Activated CD4-positive, alpha-beta T cell treated with anti-CD3 and anti-CD28 coated beads for 36 hours (primary cell): ENCODE measurements at regions of chr6 and their contacts with region 1.

Region 1: GRCh38 chr6:30556066-30556905 is at the start of gene GNL1:
- DNase-seq: peak; percentile 100
- ATAC-seq: peak; percentile 89
- H3K4me3 Mint-ChIP-seq: peak within 1 kb of the TSS; percentile 97
- H3K27ac Mint-ChIP-seq: peak within 1 kb of the TSS; percentile 100
- H3K4me1 Mint-ChIP-seq: peaks cover 34% of the 10 kb centered on the region
- H3K27me3 Mint-ChIP-seq: no peaks in the 10 kb centered on the region
- total RNA-seq, gene GNL1: 91.3 to 104 TPM

Region 2: DNA sequence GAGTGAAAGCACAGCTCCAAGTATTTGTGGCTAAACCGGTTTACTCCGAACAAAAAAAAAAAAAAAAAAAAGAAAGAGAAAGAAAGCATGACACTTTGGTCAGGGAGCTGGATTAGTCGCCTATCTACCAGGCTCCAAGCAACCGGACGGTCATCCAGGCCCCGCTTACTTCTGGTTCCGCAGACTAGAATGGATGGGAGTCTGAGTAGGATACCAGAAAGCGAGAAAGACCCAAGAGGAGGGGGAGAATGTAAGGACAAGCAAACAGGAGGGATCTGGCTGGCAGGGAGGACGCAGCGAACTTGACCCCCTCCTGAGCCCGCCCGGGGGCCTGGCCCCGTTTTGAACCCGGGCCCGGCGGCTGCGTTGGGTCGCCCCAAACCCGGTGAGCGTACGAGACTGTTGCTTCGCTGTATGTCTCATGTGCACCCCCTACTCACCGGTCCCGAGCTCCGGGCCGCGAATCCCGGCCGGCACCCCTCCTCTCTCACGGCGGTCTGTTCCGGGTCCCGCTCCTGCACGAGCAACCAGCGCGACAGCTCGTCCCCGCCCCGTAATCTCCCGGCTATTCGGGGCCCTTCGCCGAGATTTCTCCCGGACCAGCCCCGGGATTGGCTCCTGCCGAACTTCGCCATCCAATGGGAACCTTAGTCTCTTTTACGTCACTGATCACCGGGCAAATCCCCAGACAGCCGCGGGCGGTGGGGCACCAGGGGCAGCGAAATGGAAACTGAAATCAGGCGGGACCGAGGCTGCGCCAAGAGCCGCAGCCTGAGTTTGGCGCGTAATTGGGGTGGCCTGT is 343.2 kb before region 1 on chr6 and contains the start of gene TRIM26:
- CTCF ChIA-PET with region 1: no interaction called
- POLR2A ChIA-PET with region 1: no interaction called
- intact Hi-C with region 1: loop called in 1 of 2 experiments (anchors 5 kb)
- DNase-seq: peak; percentile 98
- ATAC-seq: peak; percentile 90
- H3K4me3 Mint-ChIP-seq: peak within 1 kb of the TSS; percentile 89
- H3K27ac Mint-ChIP-seq: peak within 1 kb of the TSS; percentile 99
- H3K4me1 Mint-ChIP-seq: peaks cover 50% of the 10 kb centered on the region
- H3K27me3 Mint-ChIP-seq: no peaks in the 10 kb centered on the region
- total RNA-seq, gene TRIM26: 48.4 to 60.4 TPM

Region 3: GRCh38 chr6:30399390-30400058 is 156.8 kb before region 1 on chr6:
- CTCF ChIA-PET with region 1: no interaction called
- POLR2A ChIA-PET with region 1: no interaction called
- intact Hi-C with region 1: no loop called
- DNase-seq: peak; percentile 25
- ATAC-seq: peak; percentile 44
- H3K4me3 Mint-ChIP-seq: no peak overlapping the region
- H3K27ac Mint-ChIP-seq: no peak overlapping the region
- H3K4me1 Mint-ChIP-seq: peaks cover 2% of the 10 kb centered on the region
- H3K27me3 Mint-ChIP-seq: peaks cover 20% of the 10 kb centered on the region

Region 4: GRCh38 chr6:30453508-30454116 is 102.7 kb before region 1 on chr6:
- CTCF ChIA-PET with region 1: no interaction called
- POLR2A ChIA-PET with region 1: no interaction called
- intact Hi-C with region 1: no loop called
- DNase-seq: peak; percentile 93
- ATAC-seq: peak; percentile 85
- H3K4me3 Mint-ChIP-seq: peak overlapping the region; percentile 55
- H3K27ac Mint-ChIP-seq: no peak overlapping the region
- H3K4me1 Mint-ChIP-seq: peaks cover 37% of the 10 kb centered on the region
- H3K27me3 Mint-ChIP-seq: peaks cover 83% of the 10 kb centered on the region

Region 5: DNA sequence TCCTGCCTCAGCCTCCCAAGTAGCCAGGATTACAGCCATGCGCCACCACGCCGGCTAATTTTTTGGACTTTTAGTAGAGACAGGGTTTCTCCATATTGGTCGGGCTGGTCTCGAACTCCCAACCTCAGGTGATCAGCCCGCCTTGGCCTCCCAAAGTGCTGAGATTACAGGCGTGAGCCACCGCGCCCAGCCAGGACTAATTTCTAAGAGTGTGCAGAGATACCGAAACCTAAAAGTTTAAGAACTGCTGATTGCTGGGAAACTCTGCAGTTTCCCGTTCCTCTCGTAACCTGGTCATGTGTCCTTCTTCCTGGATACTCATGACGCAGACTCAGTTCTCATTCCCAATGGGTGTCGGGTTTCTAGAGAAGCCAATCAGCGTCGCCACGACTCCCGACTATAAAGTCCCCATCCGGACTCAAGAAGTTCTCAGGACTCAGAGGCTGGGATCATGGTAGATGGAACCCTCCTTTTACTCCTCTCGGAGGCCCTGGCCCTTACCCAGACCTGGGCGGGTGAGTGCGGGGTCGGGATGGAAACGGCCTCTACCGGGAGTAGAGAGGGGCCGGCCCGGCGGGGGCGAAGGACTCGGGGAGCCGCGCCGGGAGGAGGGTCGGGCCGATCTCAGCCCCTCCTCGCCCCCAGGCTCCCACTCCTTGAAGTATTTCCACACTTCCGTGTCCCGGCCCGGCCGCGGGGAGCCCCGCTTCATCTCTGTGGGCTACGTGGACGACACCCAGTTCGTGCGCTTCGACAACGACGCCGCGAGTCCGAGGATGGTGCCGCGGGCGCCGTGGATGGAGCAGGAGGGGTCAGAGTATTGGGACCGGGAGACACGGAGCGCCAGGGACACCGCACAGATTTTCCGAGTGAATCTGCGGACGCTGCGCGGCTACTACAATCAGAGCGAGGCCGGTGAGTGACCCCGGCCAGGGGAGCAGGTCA is 66.9 kb before region 1 on chr6 and contains the start of gene HLA-E:
- CTCF ChIA-PET with region 1: interaction called, 9 read pairs
- POLR2A ChIA-PET with region 1: interaction called, 6 read pairs
- intact Hi-C with region 1: loop called (anchors 1 kb)
- DNase-seq: peak; percentile 92
- ATAC-seq: peak; percentile 78
- H3K4me3 Mint-ChIP-seq: peak within 1 kb of the TSS; percentile 95
- H3K27ac Mint-ChIP-seq: peak within 1 kb of the TSS; percentile 98
- H3K4me1 Mint-ChIP-seq: peaks cover 43% of the 10 kb centered on the region
- H3K27me3 Mint-ChIP-seq: no peaks in the 10 kb centered on the region
- total RNA-seq, gene HLA-E: 451 to 502 TPM

Region 6: GRCh38 chr6:30541515-30542403 is 14.5 kb before region 1 on chr6:
- CTCF ChIA-PET with region 1: interaction called, 104 read pairs
- POLR2A ChIA-PET with region 1: interaction called, 8 read pairs
- intact Hi-C with region 1: loop called in 1 of 2 experiments (anchors 1 kb)
- DNase-seq: peak; percentile 90
- ATAC-seq: peak; percentile 76
- H3K4me3 Mint-ChIP-seq: peak overlapping the region; percentile 59
- H3K27ac Mint-ChIP-seq: peak overlapping the region; percentile 79
- H3K4me1 Mint-ChIP-seq: peaks cover 40% of the 10 kb centered on the region
- H3K27me3 Mint-ChIP-seq: no peaks in the 10 kb centered on the region

Region 7: DNA sequence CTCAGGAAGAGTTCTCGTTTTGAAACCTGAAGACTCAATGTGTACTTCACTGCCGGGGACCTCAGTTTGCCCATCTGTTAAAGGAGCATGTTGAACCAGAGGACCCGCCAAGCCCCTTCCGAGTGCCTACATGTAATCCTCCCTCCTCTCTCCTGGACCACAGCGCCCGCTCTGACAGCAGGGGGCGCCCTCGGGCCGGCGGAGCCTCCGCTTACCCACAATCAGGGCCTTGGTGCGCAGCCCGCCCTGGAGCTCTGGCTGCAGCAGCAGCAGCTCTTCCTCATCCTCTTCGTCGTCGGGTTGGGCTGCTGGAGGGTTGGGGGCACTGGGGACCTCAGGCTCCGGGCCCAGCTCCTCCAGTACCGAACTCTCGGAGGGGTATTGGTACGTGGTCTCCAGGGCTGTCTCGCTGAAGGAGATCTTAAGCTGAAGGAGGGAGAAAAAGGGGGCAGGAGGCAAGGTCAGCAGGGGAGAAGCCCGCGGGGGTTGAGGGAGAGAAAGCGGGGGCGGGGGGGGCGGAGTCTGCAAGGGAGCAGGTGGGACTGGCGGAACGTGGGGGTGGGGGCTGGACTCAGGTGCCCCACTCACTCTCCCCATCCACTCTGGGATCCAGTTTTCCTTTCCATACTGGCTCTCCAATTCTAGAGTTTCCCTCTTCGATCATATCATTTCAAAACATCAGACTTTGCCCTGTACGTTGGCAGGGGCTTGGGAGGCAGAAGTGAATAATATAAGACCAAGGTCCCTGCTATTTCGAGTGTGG is 122.9 kb after region 1 on chr6:
- CTCF ChIA-PET with region 1: interaction called, 3 read pairs
- POLR2A ChIA-PET with region 1: interaction called, 4 read pairs
- intact Hi-C with region 1: loop called in 1 of 2 experiments (anchors 1 kb)
- DNase-seq: peak; percentile 96
- ATAC-seq: peak; percentile 37
- H3K4me3 Mint-ChIP-seq: peak overlapping the region; percentile 100
- H3K27ac Mint-ChIP-seq: peak overlapping the region; percentile 97
- H3K4me1 Mint-ChIP-seq: peaks cover 23% of the 10 kb centered on the region
- H3K27me3 Mint-ChIP-seq: no peaks in the 10 kb centered on the region

Region 8: GRCh38 chr6:30742316-30743098 is 186.2 kb after region 1 on chr6 and contains the start of gene FLOT1:
- CTCF ChIA-PET with region 1: no interaction called
- POLR2A ChIA-PET with region 1: no interaction called
- intact Hi-C with region 1: loop called in 1 of 2 experiments (anchors 1 kb)
- DNase-seq: peak; percentile 98
- ATAC-seq: peak; percentile 74
- H3K4me3 Mint-ChIP-seq: peak within 1 kb of the TSS; percentile 96
- H3K27ac Mint-ChIP-seq: peak within 1 kb of the TSS; percentile 95
- H3K4me1 Mint-ChIP-seq: peaks cover 67% of the 10 kb centered on the region
- H3K27me3 Mint-ChIP-seq: no peaks in the 10 kb centered on the region
- total RNA-seq, gene FLOT1: 155 to 188 TPM

Region 9: GRCh38 chr6:31246050-31246521 is 689.8 kb after region 1 on chr6:
- CTCF ChIA-PET with region 1: no interaction called
- POLR2A ChIA-PET with region 1: no interaction called
- intact Hi-C with region 1: no loop called
- DNase-seq: no peak
- ATAC-seq: no peak
- H3K4me3 Mint-ChIP-seq: no peak overlapping the region
- H3K27ac Mint-ChIP-seq: no peak overlapping the region
- H3K4me1 Mint-ChIP-seq: peaks cover 5% of the 10 kb centered on the region
- H3K27me3 Mint-ChIP-seq: peaks cover 9% of the 10 kb centered on the region

Region 10: DNA sequence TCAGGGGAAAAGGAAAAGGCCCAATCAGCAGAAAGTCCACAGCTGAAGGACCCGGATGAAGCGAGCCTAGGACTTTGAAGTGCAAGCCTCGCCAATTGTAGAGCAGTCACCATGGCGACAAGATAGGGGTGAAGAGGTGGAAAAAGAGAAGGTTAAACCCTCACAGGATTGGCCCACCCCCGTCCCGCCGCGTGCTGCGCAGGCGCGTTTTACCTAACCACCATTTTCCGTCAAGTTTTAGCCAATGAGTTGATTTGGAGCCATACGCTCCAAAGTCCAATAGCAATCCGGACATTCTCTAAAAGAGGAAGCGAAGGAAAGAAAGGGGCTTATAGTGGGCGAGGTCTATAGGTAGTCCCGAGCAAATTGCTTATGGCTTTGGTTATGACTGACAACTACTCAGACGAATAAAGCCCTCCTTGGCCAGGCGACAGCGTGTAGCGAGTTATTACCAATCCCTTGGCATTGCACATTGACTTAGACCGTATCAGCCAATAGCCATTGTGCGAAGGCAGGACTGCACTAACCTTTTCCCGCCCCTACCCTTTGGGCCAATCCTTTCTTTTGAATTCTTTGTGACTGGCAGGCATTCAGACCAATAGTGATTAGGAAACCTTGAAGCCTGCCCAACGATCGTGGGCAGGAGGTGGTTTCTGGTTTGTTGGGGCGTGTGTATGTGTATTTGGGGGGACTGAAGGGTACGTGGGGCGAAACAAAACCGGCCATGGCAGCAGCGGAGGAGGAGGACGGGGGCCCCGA is 1621.7 kb after region 1 on chr6 and contains the start of gene RNF5:
- CTCF ChIA-PET with region 1: no interaction called
- POLR2A ChIA-PET with region 1: no interaction called
- intact Hi-C with region 1: loop called in 1 of 2 experiments (anchors 5 kb)
- DNase-seq: peak; percentile 96
- ATAC-seq: peak; percentile 89
- H3K4me3 Mint-ChIP-seq: peak within 1 kb of the TSS; percentile 92
- H3K27ac Mint-ChIP-seq: peak within 1 kb of the TSS; percentile 98
- H3K4me1 Mint-ChIP-seq: peaks cover 70% of the 10 kb centered on the region
- H3K27me3 Mint-ChIP-seq: no peaks in the 10 kb centered on the region
- total RNA-seq, gene RNF5: 51.7 to 65.6 TPM